ENCODE measurements at regions of chr13 and their contacts with region 1.

Region 1: DNA sequence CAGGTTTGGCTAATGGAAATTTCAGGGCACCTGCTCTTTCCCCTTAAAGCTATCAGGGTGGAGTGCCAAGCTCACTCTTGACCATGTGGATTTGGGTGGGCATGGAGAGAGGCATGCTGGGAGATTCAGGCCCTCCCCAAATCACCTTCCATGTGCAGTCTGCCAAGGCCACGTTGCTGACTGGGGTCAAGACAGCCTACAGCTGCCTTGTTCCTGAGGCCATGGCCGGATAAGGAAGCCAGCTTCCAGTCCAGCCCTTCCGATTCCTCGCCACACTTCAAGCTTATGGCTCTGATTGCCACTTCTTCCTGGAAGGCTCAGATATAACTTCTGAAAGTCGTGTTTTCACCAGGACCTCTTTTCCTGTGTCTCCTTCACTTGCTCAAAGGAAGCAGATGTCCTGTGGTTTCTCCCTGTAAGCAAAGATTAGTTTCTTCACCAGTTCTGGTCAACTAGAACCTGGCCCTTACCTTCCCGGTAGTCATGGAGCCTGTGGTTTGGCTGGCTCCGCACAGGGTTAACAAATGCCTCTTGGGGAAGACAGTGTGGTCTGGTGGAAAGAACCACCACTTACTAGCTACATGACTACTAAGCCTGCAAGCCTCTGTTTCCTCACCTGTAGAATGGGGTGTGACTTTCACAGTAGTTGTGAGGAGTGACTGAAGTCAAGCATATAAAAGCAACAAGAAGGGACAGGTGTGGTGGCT is 16.1 kb upstream of the TPT1 start:
- DNase-seq: no peak
- ATAC-seq: peak; percentile 67
- H3K4me3 Mint-ChIP-seq: peak overlapping the region; percentile 31
- H3K27ac Mint-ChIP-seq: peak overlapping the region; percentile 72
- H3K4me1 Mint-ChIP-seq: peaks cover 32% of the 10 kb centered on the region
- H3K27me3 Mint-ChIP-seq: no peaks in the 10 kb centered on the region

Region 2: GRCh38 chr13:44879463-44880058 is 477.6 kb before region 1 on chr13:
- POLR2A ChIA-PET with region 1: no interaction called
- DNase-seq: no peak
- ATAC-seq: no peak
- H3K4me3 Mint-ChIP-seq: no peak overlapping the region
- H3K27ac Mint-ChIP-seq: no peak overlapping the region
- H3K4me1 Mint-ChIP-seq: no peaks in the 10 kb centered on the region
- H3K27me3 Mint-ChIP-seq: peaks cover 5% of the 10 kb centered on the region

Region 3: DNA sequence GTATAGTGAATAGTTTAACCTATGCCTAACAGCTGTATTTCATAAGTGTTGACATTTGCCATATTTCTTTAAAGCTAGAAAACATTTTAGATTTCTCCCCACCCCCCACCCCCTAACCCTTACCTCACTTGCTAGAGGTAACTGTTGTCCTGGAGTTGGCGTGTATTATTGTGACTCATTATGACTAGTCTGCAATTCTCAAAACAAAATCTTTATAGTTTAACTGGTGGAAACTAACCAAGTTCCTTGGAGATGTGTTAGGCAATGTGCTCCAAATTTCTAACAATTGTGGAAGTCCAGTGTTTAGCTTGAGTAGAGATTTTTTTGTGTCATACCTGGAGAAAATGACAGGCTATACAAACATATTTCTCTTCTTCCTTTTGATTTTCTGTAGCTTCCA is 194.3 kb before region 1 on chr13:
- POLR2A ChIA-PET with region 1: no interaction called
- DNase-seq: no peak
- ATAC-seq: no peak
- H3K4me3 Mint-ChIP-seq: no peak overlapping the region
- H3K27ac Mint-ChIP-seq: no peak overlapping the region
- H3K4me1 Mint-ChIP-seq: no peaks in the 10 kb centered on the region
- H3K27me3 Mint-ChIP-seq: no peaks in the 10 kb centered on the region

Region 4: DNA sequence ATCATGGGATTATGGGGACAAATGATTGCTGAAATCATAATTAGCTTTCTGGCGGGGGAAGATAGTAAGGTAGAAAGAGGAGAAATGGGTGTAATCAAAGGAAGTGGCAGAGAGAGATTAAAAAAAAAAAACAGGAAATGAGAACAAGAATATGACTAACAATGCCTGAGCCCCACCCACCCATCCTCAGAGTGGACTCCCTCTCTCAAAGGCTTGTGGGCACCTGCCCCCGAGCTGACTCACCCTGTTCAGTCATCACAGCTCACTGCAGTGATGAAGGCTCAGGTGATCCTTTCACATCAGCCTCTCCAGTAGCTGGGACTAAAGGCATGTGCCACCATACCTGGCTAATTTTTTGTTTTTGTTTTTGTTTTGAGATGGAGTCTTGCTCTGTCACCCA is 10.2 kb after region 1 on chr13:
- POLR2A ChIA-PET with region 1: interaction called, 10 read pairs
- DNase-seq: peak; percentile 74
- ATAC-seq: peak; percentile 100
- H3K4me3 Mint-ChIP-seq: peak overlapping the region; percentile 69
- H3K27ac Mint-ChIP-seq: peak overlapping the region; percentile 95
- H3K4me1 Mint-ChIP-seq: peaks cover 42% of the 10 kb centered on the region
- H3K27me3 Mint-ChIP-seq: no peaks in the 10 kb centered on the region